CD4-positive, alpha-beta memory T cell (primary cell): ENCODE measurements at regions of chr16 and their contacts with region 1.

Region 1: DNA sequence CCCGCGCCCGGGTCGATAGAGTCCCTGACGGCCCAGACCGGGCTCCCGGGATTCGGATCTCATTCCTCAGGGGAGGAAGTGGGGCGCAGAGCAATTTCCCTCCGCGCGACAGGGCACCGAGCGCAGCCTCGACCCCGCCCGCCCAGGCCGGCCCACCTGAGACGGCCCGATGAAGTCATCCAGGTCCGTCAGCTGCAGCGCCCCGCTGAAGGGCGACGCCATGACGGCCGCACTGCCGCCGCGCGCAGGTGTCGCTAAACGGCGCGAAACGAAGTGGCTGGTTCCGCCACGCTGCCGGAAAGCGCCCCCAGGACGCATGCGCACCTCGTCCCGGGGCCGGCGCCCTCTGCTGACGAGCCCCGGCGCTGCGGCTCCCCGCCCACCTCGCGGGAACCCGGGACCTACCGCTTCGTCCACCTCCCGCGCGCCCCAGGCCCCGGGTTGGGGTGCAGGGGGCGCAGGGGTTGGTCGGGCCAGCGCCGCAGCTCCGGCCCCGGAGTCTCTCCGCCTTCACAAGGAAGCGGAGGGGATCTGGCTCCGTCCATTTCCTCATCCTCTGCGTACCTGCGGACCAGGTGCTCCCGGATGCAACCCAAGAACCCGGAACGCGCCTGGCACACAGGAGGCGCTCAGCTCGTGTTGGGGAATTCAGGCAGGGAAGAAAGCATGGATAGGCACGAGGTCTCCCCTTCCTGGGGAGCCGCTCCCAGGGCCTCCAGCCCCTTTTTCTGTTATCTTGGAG is at the start of gene CIAO3:
- DNase-seq: peak; percentile 90 to 95 (median 91)
- H3K4me3 ChIP-seq: peak within 1 kb of the TSS; percentile 28 to 73
- H3K4me3 Mint-ChIP-seq: peak within 1 kb of the TSS; percentile 72 to 88 (median 78)
- H3K27ac ChIP-seq: peak within 1 kb of the TSS; percentile 85
- H3K27ac Mint-ChIP-seq: peak within 1 kb of the TSS in 6 of 7 donors; percentile 56 to 80 (median 62)
- H3K4me1 ChIP-seq: peaks cover 10% of the 10 kb centered on the region
- H3K4me1 Mint-ChIP-seq: peaks cover 0 to 11% (median 1%) of the 10 kb centered on the region in 4 donors
- H3K27me3 ChIP-seq: no peaks in the 10 kb centered on the region
- H3K27me3 Mint-ChIP-seq: no peaks in the 10 kb centered on the region
- total RNA-seq, gene CIAO3: 58.2 TPM

Region 2: DNA sequence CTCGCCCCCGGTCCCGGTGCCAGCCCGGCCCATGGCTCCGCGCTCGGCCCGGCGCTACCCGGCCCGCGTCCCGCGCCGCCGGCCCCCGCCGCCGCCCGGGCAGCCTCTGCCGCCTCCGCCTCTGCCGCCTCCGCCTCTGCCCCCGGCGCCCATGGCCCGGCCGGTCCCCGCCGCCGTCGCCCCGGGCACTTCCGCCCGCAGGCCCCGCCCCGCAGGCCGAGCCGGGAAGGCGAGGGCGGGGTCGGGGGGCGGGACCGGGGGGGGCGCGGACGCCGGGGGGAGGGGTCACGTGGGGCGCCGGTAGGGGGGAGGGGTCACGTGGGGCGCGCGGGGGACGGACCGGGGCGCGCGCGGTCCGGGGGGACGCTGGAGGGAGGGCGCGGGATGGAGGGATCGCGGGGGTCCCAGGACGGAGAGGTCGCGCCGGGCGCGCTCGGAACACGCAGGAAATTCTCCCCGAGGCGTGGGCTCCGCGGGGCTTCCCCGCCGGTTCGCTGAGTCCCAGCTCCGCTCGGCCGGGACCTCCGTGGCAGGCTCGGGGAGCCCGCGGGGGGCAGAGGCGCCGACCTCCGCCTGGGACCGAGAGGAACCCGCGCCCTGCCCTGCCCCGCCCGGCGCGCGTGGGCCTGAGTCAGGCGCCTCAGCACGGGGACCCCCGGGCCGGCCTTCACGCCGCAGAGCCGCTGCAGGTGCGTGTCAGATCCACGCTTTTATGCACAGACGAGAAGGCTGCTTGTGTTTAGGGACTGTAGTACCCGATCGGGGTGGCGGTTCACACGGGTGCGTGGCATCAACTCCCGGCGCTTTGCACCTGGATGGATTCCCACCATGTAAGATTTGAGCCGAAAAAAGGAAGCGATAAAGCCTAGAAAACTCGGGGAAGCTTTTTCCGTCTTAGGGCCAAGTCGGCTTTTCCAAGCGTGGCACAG is 358.9 kb before region 1 on chr16 and contains the start of gene PGAP6:
- CTCF ChIA-PET with region 1: no interaction called
- POLR2A ChIA-PET with region 1: no interaction called
- intact Hi-C with region 1: no loop called
- DNase-seq: peak in 4 of 5 donors; percentile 51 to 72 (median 62)
- H3K4me3 ChIP-seq: peak within 1 kb of the TSS; percentile 47 to 74
- H3K4me3 Mint-ChIP-seq: peak within 1 kb of the TSS; percentile 85 to 95 (median 93)
- H3K27ac ChIP-seq: peak within 1 kb of the TSS; percentile 59
- H3K27ac Mint-ChIP-seq: peak within 1 kb of the TSS; percentile 61 to 94 (median 88)
- H3K4me1 ChIP-seq: peaks cover 37% of the 10 kb centered on the region
- H3K4me1 Mint-ChIP-seq: peaks cover 10 to 31% (median 21%) of the 10 kb centered on the region in 4 donors
- H3K27me3 ChIP-seq: no peaks in the 10 kb centered on the region
- H3K27me3 Mint-ChIP-seq: no peaks in the 10 kb centered on the region
- total RNA-seq, gene PGAP6: 72.2 to 73.5 TPM

Region 3: DNA sequence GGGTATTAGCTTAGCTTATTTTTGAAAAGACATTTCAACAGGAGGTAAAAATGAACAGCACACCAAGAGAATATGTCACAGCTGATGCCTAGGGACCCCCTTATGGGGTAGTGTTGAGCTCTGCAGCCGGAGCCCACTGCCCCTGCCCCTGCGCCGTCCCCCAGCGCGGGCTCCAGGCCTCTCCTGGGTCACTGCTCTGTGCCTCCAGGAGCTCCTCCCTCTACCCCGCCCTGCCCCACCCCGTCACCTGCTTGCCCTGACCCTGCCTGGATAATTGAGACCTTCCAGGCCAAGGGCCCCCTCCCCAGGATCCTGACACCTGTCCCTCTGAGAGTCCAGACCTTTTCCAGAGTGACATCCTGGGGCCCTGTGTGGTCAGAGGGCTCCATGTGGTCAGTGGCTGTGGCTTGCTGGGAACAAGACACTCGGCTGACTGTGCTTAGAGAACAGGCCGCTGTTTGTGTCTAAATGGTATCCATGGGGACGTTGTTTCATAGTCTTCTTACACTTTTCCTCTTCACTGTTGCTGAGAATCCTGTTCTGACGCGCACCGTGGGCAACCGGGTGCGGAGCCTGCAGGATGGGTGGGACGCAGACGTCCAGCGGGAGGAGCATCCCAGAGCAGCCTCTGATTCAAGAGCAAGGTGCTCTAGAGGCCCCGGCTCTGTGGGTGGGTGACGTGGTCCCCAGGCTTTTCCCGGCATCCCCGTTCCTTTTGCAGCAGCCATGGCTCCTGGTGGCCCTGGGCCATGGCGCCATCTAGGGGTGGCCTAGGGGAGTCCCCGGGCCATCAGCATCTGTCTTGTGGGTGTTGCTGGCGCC is 130.2 kb before region 1 on chr16:
- CTCF ChIA-PET with region 1: no interaction called
- POLR2A ChIA-PET with region 1: no interaction called
- intact Hi-C with region 1: no loop called
- DNase-seq: peak; percentile 44 to 57 (median 51)
- H3K4me3 ChIP-seq: no peak overlapping the region
- H3K4me3 Mint-ChIP-seq: no peak overlapping the region
- H3K27ac ChIP-seq: no peak overlapping the region
- H3K27ac Mint-ChIP-seq: peak overlapping the region in 3 of 7 donors; percentile 8 to 22 (median 19)
- H3K4me1 ChIP-seq: no peaks in the 10 kb centered on the region
- H3K4me1 Mint-ChIP-seq: peaks cover 3 to 17% (median 9%) of the 10 kb centered on the region in 4 donors
- H3K27me3 ChIP-seq: no peaks in the 10 kb centered on the region
- H3K27me3 Mint-ChIP-seq: no peaks in the 10 kb centered on the region

Region 4: GRCh38 chr16:714558-715476 is 26.1 kb before region 1 on chr16 and contains the start of gene METRN:
- CTCF ChIA-PET with region 1: interaction called, 27 read pairs
- POLR2A ChIA-PET with region 1: interaction called, 21 read pairs
- intact Hi-C with region 1: loop called (anchors 1 kb)
- DNase-seq: peak; percentile 81 to 85 (median 84)
- H3K4me3 ChIP-seq: peak within 1 kb of the TSS in 1 of 2 donors; percentile 43
- H3K4me3 Mint-ChIP-seq: peak within 1 kb of the TSS; percentile 39 to 73 (median 56)
- H3K27ac ChIP-seq: no peak within 1 kb of the TSS
- H3K27ac Mint-ChIP-seq: peak within 1 kb of the TSS in 2 of 7 donors; percentile 35 to 44
- H3K4me1 ChIP-seq: peaks cover 21% of the 10 kb centered on the region
- H3K4me1 Mint-ChIP-seq: peaks cover 0 to 22% (median 9%) of the 10 kb centered on the region in 4 donors
- H3K27me3 ChIP-seq: peaks cover 10% of the 10 kb centered on the region
- H3K27me3 Mint-ChIP-seq: peaks cover 0 to 8% of the 10 kb centered on the region in 2 donors
- total RNA-seq, gene METRN: 6.9 to 7.7 TPM

Region 5: DNA sequence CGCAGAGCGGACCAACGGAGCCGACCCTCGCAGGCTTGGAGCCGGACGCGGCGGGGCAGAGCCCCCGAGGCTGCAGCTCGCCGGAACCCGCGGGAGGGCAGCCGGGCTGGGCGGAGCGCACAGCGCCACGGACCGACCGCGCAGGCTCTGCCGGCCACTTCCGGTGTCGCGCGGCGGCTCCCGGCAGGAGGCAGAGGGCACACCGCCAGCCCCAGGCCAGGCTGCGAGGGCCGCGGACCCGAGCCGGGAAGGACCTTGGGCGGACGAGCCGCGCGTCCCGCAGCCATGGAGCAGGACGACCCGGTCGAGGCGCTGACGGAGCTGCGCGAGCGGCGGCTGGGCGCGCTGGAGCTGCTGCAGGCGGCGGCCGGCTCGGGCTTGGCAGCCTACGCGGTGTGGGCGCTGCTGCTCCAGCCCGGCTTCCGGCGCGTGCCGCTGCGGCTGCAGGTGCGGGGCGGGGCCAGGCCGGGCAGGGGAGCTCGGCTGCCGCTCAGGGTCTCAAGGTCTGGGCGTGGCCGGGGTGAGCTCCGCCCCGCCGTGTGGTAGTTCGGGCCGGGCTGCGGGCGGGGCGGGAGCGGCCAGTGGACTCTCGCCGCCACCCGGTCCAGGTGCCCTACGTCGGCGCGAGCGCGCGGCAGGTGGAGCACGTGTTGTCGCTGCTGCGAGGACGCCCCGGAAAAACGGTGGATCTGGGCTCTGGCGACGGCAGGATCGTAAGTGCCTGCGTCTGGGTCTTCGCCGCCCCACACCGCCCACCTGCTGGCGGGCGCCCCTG is 19.8 kb before region 1 on chr16 and contains the start of gene ANTKMT:
- CTCF ChIA-PET with region 1: interaction called, 27 read pairs
- POLR2A ChIA-PET with region 1: interaction called, 21 read pairs
- intact Hi-C with region 1: loop called (anchors 2 kb)
- DNase-seq: peak; percentile 71 to 79 (median 77)
- H3K4me3 ChIP-seq: peak within 1 kb of the TSS; percentile 42 to 60
- H3K4me3 Mint-ChIP-seq: peak within 1 kb of the TSS; percentile 80 to 88 (median 84)
- H3K27ac ChIP-seq: peak within 1 kb of the TSS; percentile 47
- H3K27ac Mint-ChIP-seq: peak within 1 kb of the TSS; percentile 47 to 91 (median 84)
- H3K4me1 ChIP-seq: peaks cover 30% of the 10 kb centered on the region
- H3K4me1 Mint-ChIP-seq: peaks cover 3 to 33% (median 12%) of the 10 kb centered on the region in 4 donors
- H3K27me3 ChIP-seq: no peaks in the 10 kb centered on the region
- H3K27me3 Mint-ChIP-seq: no peaks in the 10 kb centered on the region
- total RNA-seq, gene ANTKMT: 21.5 to 23.5 TPM

Region 6: GRCh38 chr16:728131-728889 is 12.6 kb before region 1 on chr16:
- CTCF ChIA-PET with region 1: interaction called, 27 read pairs
- POLR2A ChIA-PET with region 1: interaction called, 15 read pairs
- intact Hi-C with region 1: loop called (anchors 2 kb)
- DNase-seq: peak; percentile 67 to 75 (median 73)
- H3K4me3 ChIP-seq: no peak overlapping the region
- H3K4me3 Mint-ChIP-seq: peak overlapping the region in 7 of 8 donors; percentile 15 to 68 (median 60)
- H3K27ac ChIP-seq: no peak overlapping the region
- H3K27ac Mint-ChIP-seq: no peak overlapping the region
- H3K4me1 ChIP-seq: peaks cover 11% of the 10 kb centered on the region
- H3K4me1 Mint-ChIP-seq: peaks cover 0 to 4% (median 0%) of the 10 kb centered on the region in 4 donors
- H3K27me3 ChIP-seq: no peaks in the 10 kb centered on the region
- H3K27me3 Mint-ChIP-seq: no peaks in the 10 kb centered on the region